Activated naive CD4-positive, alpha-beta T cell treated with anti-CD3 and anti-CD28 coated beads for 36 hours (primary cell): ENCODE measurements at regions of chr1 and their contacts with region 1.

Region 1: DNA sequence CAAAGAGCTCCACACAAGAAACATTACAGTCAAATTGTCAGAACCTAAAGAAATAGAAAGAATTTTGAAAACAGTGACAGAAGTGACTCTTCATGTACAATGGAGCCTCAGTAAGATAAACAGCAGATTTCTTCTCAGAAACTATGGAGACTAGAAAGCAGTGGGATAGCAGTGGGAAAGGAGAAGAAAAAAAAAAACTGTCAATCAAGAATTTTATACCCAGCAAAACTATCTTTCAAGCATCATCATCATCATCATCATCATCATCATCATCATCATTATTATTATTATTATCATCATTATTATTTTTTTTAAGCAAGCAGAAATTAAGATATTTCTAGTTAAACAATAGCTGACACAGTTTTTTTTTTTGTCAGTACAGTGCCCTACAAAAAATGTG is 24.2 kb downstream of the CEP170 start:
- DNase-seq: no peak
- H3K4me3 Mint-ChIP-seq: no peak overlapping the region
- H3K27ac Mint-ChIP-seq: no peak overlapping the region
- H3K4me1 Mint-ChIP-seq: peaks cover 9% of the 10 kb centered on the region
- H3K27me3 Mint-ChIP-seq: no peaks in the 10 kb centered on the region

Region 2: DNA sequence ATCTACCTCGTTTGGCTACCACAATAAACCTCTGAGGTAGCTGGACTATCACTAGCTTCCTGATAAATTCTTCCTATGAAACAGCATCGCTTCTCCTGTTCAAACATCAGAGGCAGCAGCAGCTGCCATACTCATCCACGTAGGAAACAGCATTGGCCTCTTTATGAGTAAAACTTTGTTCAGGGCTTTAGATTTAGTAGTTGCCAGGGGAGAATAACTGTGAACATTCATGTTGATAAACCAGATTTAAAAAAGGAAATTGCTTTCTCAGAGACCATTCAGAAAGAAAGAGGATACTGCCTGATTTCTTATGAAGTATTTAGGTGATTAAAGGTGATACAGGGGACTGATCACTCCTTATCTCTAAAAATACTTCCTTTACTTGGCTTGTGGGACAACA is 17.0 kb after region 1 on chr1:
- CTCF ChIA-PET with region 1: interaction called, 3 read pairs
- intact Hi-C with region 1: loop called (anchors 2 kb)
- DNase-seq: no peak
- H3K4me3 Mint-ChIP-seq: no peak overlapping the region
- H3K27ac Mint-ChIP-seq: no peak overlapping the region
- H3K4me1 Mint-ChIP-seq: peaks cover 37% of the 10 kb centered on the region
- H3K27me3 Mint-ChIP-seq: no peaks in the 10 kb centered on the region